ENCODE measurements at regions of chr1 and their contacts with region 1.

Region 1: GRCh38 chr1:115112496-115113375 is 23.4 kb upstream of the TSPAN2 start:
- DNase-seq: no peak
- ATAC-seq: peak; percentile 70
- H3K4me3 ChIP-seq: no peak overlapping the region
- H3K27ac ChIP-seq: no peak overlapping the region
- H3K4me1 ChIP-seq: no peaks in the 10 kb centered on the region
- H3K27me3 ChIP-seq: no peaks in the 10 kb centered on the region; a peak in 1 of 4 replicates
- CTCF ChIP-seq: peak; percentile 77 to 95 (median 90)
- EP300 ChIP-seq: no peak
- POLR2A ChIP-seq: no peak
- RAD21 ChIP-seq: peak; percentile 83

Region 2: DNA sequence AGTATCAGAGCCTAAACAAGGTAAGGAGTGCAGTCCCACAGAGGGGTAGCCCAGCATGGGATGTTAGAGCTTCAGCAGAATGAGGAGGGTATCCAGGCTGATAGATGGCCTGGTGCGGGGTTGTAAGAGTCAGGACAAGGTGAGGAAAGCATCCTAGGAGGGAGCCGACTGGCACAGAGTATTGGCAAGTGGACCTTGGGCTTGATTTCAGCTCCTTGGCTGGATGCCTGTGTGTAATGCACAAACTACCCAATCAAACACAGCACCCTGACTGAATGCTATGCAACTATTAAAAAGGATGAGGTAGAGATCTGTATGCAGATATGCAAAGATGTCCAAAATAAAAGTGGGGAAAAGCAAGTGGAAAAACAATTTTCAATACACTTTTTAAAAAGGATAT is 460.8 kb before region 1 on chr1:
- CTCF ChIA-PET with region 1: no interaction called
- POLR2A ChIA-PET with region 1: no interaction called
- RAD21 ChIA-PET with region 1: no interaction called
- SMC1A ChIA-PET with region 1: no interaction called
- in situ Hi-C with region 1: no loop called
- intact Hi-C with region 1: no loop called
- DNase-seq: no peak
- ATAC-seq: no peak
- H3K4me3 ChIP-seq: no peak overlapping the region
- H3K27ac ChIP-seq: no peak overlapping the region
- H3K4me1 ChIP-seq: no peaks in the 10 kb centered on the region
- H3K27me3 ChIP-seq: no peaks in the 10 kb centered on the region; a peak in 1 of 4 replicates
- CTCF ChIP-seq: no peak
- EP300 ChIP-seq: no peak
- POLR2A ChIP-seq: no peak
- RAD21 ChIP-seq: no peak

Region 3: DNA sequence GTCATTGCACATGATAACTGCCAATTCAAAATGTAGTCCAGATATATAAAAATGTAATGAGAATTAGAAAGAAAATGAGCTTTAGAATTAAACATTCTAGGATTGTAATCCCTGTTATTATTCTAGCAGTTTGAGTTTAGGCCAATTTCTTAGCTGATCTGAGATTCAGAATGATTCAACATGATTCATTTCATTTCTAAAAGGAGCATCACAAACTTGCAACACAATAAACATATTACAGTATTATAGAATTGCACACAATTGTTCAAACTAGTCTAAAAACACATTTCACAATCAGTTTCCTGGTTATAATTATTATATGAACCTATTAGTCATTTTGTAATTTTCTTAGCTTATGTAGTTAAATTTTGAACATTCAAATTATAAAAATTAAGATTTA is 126.5 kb before region 1 on chr1:
- CTCF ChIA-PET with region 1: interaction called, 64 read pairs
- POLR2A ChIA-PET with region 1: no interaction called
- RAD21 ChIA-PET with region 1: interaction called, 13 read pairs
- SMC1A ChIA-PET with region 1: interaction called, 58 read pairs
- in situ Hi-C with region 1: no loop called
- intact Hi-C with region 1: no loop called
- DNase-seq: no peak
- ATAC-seq: no peak
- H3K4me3 ChIP-seq: no peak overlapping the region
- H3K27ac ChIP-seq: no peak overlapping the region
- H3K4me1 ChIP-seq: no peaks in the 10 kb centered on the region
- H3K27me3 ChIP-seq: no peaks in the 10 kb centered on the region
- CTCF ChIP-seq: no peak
- EP300 ChIP-seq: no peak
- POLR2A ChIP-seq: no peak
- RAD21 ChIP-seq: no peak

Region 4: DNA sequence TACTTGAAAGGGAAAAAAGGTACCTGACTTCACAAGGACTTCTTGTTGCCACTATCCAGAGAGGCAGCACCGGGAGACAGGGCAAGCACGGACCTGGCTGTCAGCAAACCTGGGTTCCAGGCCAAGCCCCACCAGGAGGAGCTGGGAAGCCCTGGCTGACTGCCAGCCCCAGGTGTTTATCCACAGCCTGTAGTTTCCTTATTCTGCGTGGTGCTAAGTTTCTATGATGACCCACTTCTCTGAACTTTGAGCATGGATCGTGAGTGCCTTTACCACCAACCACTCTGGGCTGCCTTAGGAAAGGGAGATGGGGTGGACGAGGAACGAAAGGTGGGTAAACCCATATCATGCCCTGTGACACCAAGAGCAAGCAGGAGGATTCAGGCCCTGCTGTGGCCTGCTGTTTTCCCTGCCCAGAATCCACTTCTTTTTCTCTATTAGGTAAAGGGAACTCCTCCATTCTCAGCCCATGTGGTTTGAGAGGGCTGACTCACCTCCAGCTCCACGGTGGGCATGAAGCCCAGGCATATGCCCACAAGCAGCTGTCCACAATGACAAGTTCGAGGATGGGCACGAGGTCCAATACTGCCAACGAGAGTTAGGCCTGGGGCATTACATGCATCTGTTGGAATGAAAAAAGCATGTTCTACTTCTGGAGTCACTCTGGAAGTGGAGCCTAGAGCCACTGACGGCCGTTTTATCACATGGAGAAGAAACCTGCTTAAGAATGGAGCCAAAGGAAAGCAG is 43.7 kb before region 1 on chr1:
- CTCF ChIA-PET with region 1: interaction called, 9 read pairs
- POLR2A ChIA-PET with region 1: no interaction called
- RAD21 ChIA-PET with region 1: interaction called, 11 read pairs
- SMC1A ChIA-PET with region 1: interaction called, 6 read pairs
- in situ Hi-C with region 1: no loop called
- intact Hi-C with region 1: no loop called
- DNase-seq: no peak
- ATAC-seq: no peak
- H3K4me3 ChIP-seq: no peak overlapping the region
- H3K27ac ChIP-seq: no peak overlapping the region
- H3K4me1 ChIP-seq: no peaks in the 10 kb centered on the region
- H3K27me3 ChIP-seq: no peaks in the 10 kb centered on the region; a peak in 1 of 4 replicates
- CTCF ChIP-seq: no peak
- EP300 ChIP-seq: no peak
- POLR2A ChIP-seq: no peak
- RAD21 ChIP-seq: no peak

Region 5: DNA sequence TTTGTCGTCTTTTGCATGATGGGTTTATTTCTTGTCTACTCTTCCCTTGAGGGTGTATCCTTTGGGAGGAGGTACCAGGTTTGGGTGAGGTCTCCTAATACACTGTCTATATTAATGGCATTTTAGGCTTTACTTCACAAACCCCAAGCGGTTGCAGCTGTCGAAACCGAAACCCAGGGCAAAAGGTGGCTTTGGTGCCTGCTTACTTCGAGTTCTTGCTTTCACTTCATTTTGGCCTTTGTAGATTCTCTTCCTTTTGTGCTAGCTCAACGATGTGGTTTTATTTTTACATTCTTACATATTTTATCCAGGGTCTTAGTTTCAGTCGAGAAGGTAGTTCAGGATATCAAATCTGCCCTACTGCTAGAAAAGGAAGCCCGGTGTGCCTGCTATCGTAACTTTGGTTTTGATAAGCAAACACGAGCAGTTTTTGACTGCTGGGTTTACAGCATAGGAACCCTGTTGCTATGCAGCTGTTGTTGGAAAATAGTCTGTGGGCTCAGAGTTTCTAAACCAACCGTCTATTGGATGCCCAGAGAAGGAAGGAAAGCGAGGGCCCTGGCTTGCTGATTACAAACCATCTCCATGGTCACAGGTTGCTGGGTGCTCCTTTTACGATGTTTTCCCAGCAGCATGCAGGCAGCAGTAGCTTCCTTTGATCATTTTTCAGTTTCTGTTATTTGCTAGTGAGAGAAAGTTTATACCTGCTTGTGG is 13.6 kb before region 1 on chr1:
- CTCF ChIA-PET with region 1: interaction called, 38 read pairs
- POLR2A ChIA-PET with region 1: interaction called, 4 read pairs
- RAD21 ChIA-PET with region 1: interaction called, 19 read pairs
- SMC1A ChIA-PET with region 1: interaction called, 31 read pairs
- in situ Hi-C with region 1: no loop called
- intact Hi-C with region 1: no loop called
- DNase-seq: peak; percentile 37
- ATAC-seq: peak; percentile 93
- H3K4me3 ChIP-seq: peak overlapping the region; percentile 62; the same call in 1 of the 2 replicates
- H3K27ac ChIP-seq: no peak overlapping the region
- H3K4me1 ChIP-seq: peaks cover 7% of the 10 kb centered on the region
- H3K27me3 ChIP-seq: no peaks in the 10 kb centered on the region
- CTCF ChIP-seq: no peak
- EP300 ChIP-seq: peak in 1 of 2 experiments; percentile 32; a peak in 2 of 4 replicates
- POLR2A ChIP-seq: no peak
- RAD21 ChIP-seq: no peak

Measured in GM12878 (cell line).